ENCODE measurements at regions of chr7 and their contacts with region 1.

Region 1: GRCh38 chr7:1812509-1813393 is 142.7 kb downstream of the ELFN1 start:
- DNase-seq: no peak
- ATAC-seq: peak; percentile 42

Region 2: GRCh38 chr7:1919539-1920265 is 107.0 kb after region 1 on chr7:
- intact Hi-C with region 1: loop called (anchors 10 kb)
- DNase-seq: peak; percentile 74
- ATAC-seq: peak; percentile 78

Region 3: DNA sequence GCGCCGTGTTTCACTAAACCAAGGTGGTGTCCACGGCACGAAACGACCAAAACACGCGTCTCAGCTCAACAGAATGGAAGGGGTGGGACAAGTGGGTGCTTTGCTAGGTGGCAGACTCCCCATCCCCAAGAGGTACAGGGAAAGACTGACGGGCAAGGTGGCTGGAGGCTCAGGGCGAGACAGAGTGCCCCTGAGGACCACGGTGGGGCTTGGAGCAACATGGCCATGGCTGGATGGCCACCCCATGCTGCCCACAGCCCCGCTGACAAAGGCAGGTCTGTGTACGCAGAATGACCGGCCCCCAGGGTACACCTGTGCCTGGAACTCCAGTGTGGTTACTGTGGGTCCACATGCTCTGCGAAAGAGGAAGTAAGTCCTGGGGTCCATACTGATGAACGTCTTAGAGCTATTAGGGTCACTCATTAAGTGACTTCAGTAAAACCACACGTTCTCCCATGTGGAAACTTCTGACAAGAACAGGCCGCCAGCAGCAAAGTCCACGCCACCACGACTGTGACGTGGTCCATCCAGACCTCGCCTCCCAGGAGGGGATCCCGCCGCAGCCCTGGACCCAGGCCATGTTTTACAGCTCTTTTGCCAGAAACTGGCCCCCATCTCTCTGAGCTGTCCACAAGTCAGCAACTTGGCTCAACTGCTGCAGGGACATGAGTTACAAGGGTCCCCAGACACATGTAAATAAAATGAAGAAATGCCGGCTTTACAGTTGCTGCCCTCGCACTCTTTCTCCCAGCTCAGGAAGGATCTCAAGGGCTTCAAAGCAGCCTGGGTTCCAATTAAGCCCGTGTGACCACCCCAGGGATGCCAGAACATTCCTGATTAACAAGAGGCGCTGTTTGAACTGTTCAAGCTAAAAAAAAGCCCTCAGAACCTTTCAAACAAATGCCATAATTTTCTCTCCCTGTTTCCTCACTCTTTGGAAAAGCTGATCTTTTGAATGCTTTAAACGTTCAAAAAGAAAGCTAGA is 353.2 kb after region 1 on chr7:
- intact Hi-C with region 1: no loop called
- DNase-seq: peak; percentile 63
- ATAC-seq: peak; percentile 62